ENCODE measurements at regions of chr1 and their contacts with region 1.

Region 1: GRCh38 chr1:26431979-26432695 is at the start of gene DHDDS:
- DNase-seq: peak; percentile 97 to 99
- ATAC-seq: peak; percentile 99 to 100 (median 100)
- H3K4me3 ChIP-seq: peak within 1 kb of the TSS; percentile 48 to 87 (median 68)
- H3K27ac ChIP-seq: peak within 1 kb of the TSS in 9 of 10 donors; percentile 46 to 92 (median 80)
- H3K4me1 ChIP-seq: peaks cover 4 to 35% (median 22%) of the 10 kb centered on the region in 9 donors
- H3K27me3 ChIP-seq: no peaks in the 10 kb centered on the region
- CTCF ChIP-seq: no peak
- total RNA-seq, gene DHDDS: 23.0 to 45.8 (median 32.5) TPM

Region 2: GRCh38 chr1:26472901-26473845 is 41.0 kb after region 1 on chr1:
- intact Hi-C with region 1: loop called in 1 of 10 experiments (anchors 2 kb)
- DNase-seq: peak; percentile 95 to 98
- ATAC-seq: peak; percentile 89 to 94 (median 92)
- H3K4me3 ChIP-seq: peak overlapping the region; percentile 69 to 100 (median 98)
- H3K27ac ChIP-seq: peak overlapping the region; percentile 95 to 100 (median 100)
- H3K4me1 ChIP-seq: peaks cover 3 to 52% (median 35%) of the 10 kb centered on the region in 9 donors
- H3K27me3 ChIP-seq: no peaks in the 10 kb centered on the region
- CTCF ChIP-seq: no peak